Panc1 (cell line): ENCODE measurements at regions of chr2 and their contacts with region 1.

Region 1: GRCh38 chr2:43226558-43226954 is at the start of gene ZFP36L2:
- DNase-seq: no peak
- ATAC-seq: peak; percentile 82
- H3K4me3 ChIP-seq: peak within 1 kb of the TSS; percentile 80 to 90
- H3K27ac ChIP-seq: peak within 1 kb of the TSS; percentile 93
- H3K4me1 ChIP-seq: peaks cover 28% of the 10 kb centered on the region
- H3K27me3 ChIP-seq: no peaks in the 10 kb centered on the region
- CTCF ChIP-seq: no peak
- total RNA-seq, gene ZFP36L2: 46.3 TPM

Region 2: DNA sequence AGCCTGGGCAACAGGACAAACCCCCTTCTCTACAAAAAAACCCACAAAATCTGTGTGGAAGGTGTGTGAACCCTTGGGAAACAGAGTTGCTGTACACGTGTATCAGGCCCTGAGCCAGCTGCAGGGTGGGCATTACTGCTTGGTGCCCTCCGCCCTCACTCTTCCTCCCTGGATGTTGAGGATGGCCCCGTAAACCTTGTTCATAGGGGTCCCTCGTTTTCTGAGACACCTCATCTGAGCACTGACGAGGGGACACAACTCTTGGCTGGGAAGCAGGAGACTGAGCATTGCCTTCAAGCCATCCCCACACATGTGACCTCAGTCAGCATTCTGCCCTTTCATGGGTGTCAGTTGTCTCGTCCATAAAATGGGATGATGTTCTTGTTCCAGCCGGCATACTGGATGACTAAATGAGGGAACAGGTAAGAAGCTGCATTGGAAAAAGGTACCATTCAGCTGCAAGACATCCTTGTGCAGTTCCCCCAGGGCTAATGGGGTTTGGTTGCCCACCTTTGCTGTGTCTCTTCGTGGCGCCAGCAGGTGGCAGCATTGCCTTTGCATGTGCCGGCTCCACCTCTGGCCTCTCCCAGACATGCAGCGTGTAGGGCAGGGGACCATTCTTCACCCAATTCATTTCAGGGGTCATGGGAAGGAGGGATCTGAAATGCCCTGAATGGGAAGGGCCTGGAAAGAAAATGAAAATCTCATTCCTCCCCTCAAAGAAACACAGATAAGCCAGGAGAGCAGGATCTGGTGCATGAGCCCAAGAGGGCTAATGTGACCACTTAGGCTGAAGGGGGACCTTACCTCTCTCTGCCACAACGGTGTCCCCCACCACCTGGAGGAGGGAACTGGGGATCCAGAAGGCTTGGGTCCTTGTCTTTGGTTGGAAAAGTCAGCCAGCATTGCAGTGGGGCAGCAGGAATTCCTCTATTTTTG is 397.8 kb before region 1 on chr2:
- CTCF ChIA-PET with region 1: no interaction called
- POLR2A ChIA-PET with region 1: no interaction called
- in situ Hi-C with region 1: no loop called
- intact Hi-C with region 1: loop called (anchors 5 kb)
- DNase-seq: no peak
- ATAC-seq: peak; percentile 91
- H3K4me3 ChIP-seq: no peak overlapping the region
- H3K27ac ChIP-seq: no peak overlapping the region
- H3K4me1 ChIP-seq: peaks cover 4% of the 10 kb centered on the region
- H3K27me3 ChIP-seq: no peaks in the 10 kb centered on the region
- CTCF ChIP-seq: peak; percentile 95

Region 3: GRCh38 chr2:42944779-42945415 is 281.7 kb before region 1 on chr2:
- CTCF ChIA-PET with region 1: interaction called, 6 read pairs
- POLR2A ChIA-PET with region 1: no interaction called
- in situ Hi-C with region 1: no loop called
- intact Hi-C with region 1: loop called (anchors 2 kb)
- DNase-seq: no peak
- ATAC-seq: peak; percentile 69; the same call in 1 of the 2 replicates
- H3K4me3 ChIP-seq: no peak overlapping the region
- H3K27ac ChIP-seq: no peak overlapping the region
- H3K4me1 ChIP-seq: no peaks in the 10 kb centered on the region
- H3K27me3 ChIP-seq: no peaks in the 10 kb centered on the region
- CTCF ChIP-seq: no peak

Region 4: GRCh38 chr2:43000242-43001054 is 226.1 kb before region 1 on chr2:
- CTCF ChIA-PET with region 1: no interaction called
- POLR2A ChIA-PET with region 1: no interaction called
- in situ Hi-C with region 1: no loop called
- intact Hi-C with region 1: no loop called
- DNase-seq: no peak
- ATAC-seq: no peak
- H3K4me3 ChIP-seq: no peak overlapping the region
- H3K27ac ChIP-seq: no peak overlapping the region
- H3K4me1 ChIP-seq: no peaks in the 10 kb centered on the region
- H3K27me3 ChIP-seq: no peaks in the 10 kb centered on the region
- CTCF ChIP-seq: no peak

Region 5: DNA sequence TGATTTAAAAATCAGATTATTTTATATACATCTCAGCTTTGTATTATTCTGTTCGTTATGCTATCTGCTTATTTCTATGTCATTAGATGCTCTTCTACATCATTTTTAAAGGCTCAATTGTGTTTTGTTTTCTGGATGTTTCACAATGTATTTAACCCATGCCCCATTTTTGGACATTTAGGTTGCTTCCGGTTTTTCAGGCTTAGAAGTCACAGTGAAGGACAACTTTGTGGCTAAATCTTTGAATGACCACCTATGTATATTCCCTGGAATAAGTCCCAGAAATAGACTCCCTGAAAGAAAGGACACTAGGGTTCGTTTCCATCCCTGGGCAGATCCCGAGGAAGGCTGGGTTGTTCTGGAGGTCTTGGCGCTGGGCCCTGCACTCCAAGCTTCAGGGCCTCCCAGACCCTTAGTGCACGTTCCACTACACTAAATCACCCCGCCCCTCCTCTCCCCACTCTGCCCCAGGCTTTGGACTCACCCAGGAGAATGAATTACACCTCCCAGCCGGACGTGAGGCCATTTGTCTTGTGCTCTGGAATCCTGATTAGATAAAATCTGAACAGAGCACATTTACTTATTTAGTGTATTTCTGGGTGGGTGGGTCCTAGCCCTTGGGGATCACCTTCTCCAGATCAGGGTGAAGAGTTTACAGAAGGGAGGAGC is 188.4 kb before region 1 on chr2:
- CTCF ChIA-PET with region 1: no interaction called
- POLR2A ChIA-PET with region 1: interaction called, 11 read pairs
- in situ Hi-C with region 1: no loop called
- intact Hi-C with region 1: no loop called
- DNase-seq: no peak
- ATAC-seq: no peak
- H3K4me3 ChIP-seq: no peak overlapping the region
- H3K27ac ChIP-seq: no peak overlapping the region
- H3K4me1 ChIP-seq: peaks cover 14% of the 10 kb centered on the region
- H3K27me3 ChIP-seq: no peaks in the 10 kb centered on the region
- CTCF ChIP-seq: no peak

Region 6: GRCh38 chr2:43165378-43166069 is 61.0 kb before region 1 on chr2:
- CTCF ChIA-PET with region 1: interaction called, 10 read pairs
- POLR2A ChIA-PET with region 1: no interaction called
- in situ Hi-C with region 1: no loop called
- intact Hi-C with region 1: no loop called
- DNase-seq: no peak
- ATAC-seq: no peak
- H3K4me3 ChIP-seq: no peak overlapping the region
- H3K27ac ChIP-seq: no peak overlapping the region
- H3K4me1 ChIP-seq: peaks cover 11% of the 10 kb centered on the region
- H3K27me3 ChIP-seq: no peaks in the 10 kb centered on the region
- CTCF ChIP-seq: no peak

Region 7: DNA sequence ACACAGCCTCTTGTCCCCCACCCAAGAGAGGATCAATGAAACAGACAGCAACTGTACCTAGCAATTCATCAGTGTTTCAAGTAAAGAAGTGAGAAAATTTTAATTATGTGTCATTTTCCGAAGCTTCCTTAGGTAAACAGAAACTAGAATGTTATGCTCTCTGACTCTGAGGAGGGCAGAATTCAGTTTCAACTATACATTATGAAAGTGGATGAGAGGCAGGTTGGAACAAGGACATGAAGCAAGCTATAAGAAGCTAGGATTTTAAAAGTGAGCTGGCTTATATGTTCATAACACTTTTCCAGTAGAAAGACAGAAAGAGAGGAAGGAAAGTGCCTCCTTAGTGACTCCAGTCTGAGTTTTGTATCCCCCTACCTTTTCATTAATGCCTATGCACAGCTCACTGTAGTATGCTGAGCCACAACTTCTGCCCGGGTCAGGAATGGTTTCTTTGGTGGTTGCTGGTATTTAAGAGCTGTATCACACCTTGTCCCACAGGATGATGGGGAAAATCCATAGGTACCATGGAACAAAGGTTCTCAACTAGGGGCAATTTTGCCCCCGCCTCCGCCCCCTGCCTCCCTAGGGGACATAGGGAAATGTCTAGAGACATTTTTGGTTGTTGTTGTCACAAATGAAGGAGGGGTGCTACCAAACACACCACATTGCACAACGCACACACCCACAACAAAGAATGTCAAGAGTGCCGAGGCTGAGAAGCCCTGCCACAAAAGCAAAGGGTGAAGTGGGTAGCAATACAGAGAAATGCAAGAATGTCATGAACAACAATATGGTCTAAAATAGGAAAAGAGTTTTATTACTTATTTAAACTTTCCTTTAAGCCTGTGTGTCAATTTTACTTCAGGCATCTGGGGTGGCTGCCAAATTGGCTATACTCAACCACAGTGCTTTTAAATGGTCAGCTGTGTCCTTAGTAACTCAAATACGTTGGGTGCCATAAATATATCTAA is 160.8 kb after region 1 on chr2:
- CTCF ChIA-PET with region 1: no interaction called
- POLR2A ChIA-PET with region 1: no interaction called
- in situ Hi-C with region 1: no loop called
- intact Hi-C with region 1: no loop called
- DNase-seq: no peak
- ATAC-seq: no peak
- H3K4me3 ChIP-seq: no peak overlapping the region
- H3K27ac ChIP-seq: no peak overlapping the region
- H3K4me1 ChIP-seq: peaks cover 15% of the 10 kb centered on the region; the same call in 1 of the 2 replicates
- H3K27me3 ChIP-seq: no peaks in the 10 kb centered on the region
- CTCF ChIP-seq: no peak